Ascending aorta (tissue), 2 donors: ENCODE measurements at regions of chr5 and their contacts with region 1.

Region 1: DNA sequence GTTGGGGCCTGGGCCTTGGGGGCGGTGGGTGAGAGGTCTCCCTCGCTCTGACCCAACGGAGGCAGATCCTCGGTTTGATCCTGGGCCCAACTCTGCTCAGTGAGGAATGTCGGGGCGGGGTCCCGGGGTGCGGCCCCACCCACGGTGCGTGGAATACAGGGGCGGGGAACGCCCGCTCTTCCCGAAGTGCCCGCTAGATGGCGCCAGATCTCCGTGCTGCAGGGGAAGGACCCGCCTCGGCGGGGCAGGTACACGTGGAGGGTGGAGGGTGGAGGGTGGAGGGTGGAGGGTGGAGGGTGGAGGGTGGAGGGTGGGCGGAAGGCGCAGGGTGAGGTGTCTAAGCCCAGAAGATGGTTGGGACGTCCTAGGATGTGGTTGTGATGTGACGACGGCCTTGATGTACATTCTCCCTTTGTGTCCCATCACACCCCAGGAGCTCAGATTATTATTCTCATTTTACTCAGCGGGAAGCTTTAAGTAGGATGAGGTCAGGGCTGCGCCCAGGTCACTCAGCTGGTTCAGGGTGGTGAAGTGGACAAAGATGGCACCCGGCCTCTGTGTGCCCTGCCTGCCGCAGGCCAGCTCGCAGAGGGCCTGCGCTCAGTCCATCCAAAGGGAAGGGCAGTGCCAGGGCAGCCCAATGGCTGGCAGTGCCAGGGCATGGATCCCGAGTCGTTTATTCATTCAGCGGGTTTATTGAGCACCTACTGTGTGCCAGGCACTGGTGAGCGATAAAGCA is 9.4 kb upstream of the RPS14 start:
- DNase-seq: peak; percentile 24 to 91
- H3K4me3 ChIP-seq: peak overlapping the region in 1 of 2 donors; percentile 55
- H3K27ac ChIP-seq: no peak overlapping the region
- H3K4me1 ChIP-seq: no peaks in the 10 kb centered on the region
- H3K27me3 ChIP-seq: no peaks in the 10 kb centered on the region
- CTCF ChIP-seq: peak; percentile 84 to 97 (median 90)

Region 2: GRCh38 chr5:150523472-150524350 is 64.7 kb after region 1 on chr5:
- intact Hi-C with region 1: loop called (anchors 1 kb)
- DNase-seq: no peak
- H3K4me3 ChIP-seq: no peak overlapping the region
- H3K27ac ChIP-seq: no peak overlapping the region
- H3K4me1 ChIP-seq: peaks cover 5 to 34% of the 10 kb centered on the region in 2 donors
- H3K27me3 ChIP-seq: no peaks in the 10 kb centered on the region
- CTCF ChIP-seq: peak; percentile 45 to 62 (median 54)

Region 3: DNA sequence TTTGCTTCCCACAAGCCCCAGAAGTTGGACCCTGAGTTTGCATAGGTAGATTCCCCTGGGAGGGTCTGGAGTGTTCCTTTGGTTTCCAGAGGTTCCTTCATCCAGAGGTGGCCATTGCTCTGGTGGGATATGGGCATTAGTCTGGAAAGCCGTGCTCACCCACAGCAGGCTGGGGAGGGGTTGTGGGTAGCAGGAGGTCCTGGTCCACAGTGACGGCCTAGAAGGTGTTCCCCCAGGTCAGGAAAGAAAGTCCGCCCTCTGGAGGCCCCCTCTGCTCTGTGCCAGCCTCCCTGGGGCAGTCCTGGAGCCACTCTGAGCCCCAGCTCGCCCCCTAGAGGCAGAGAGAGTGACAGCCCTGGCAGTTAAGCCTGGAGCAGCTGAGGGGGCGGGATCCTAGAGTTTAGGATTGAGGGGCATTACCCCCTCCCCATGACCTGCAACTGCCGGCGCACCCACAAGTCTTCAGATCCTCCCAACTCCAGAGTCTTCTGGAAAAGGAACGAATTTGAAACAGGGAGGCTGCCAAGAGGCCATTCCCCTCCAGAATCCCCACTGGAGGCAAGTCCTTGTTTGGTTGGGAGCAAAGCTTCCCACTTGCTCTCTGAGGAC is 85.7 kb after region 1 on chr5:
- intact Hi-C with region 1: loop called (anchors 2 kb)
- DNase-seq: peak in 1 of 2 donors; percentile 78
- H3K4me3 ChIP-seq: no peak overlapping the region
- H3K27ac ChIP-seq: peak overlapping the region; percentile 73 to 90
- H3K4me1 ChIP-seq: peaks cover 6 to 21% of the 10 kb centered on the region in 2 donors
- H3K27me3 ChIP-seq: no peaks in the 10 kb centered on the region
- CTCF ChIP-seq: peak; percentile 58 to 62 (median 61)

Region 4: DNA sequence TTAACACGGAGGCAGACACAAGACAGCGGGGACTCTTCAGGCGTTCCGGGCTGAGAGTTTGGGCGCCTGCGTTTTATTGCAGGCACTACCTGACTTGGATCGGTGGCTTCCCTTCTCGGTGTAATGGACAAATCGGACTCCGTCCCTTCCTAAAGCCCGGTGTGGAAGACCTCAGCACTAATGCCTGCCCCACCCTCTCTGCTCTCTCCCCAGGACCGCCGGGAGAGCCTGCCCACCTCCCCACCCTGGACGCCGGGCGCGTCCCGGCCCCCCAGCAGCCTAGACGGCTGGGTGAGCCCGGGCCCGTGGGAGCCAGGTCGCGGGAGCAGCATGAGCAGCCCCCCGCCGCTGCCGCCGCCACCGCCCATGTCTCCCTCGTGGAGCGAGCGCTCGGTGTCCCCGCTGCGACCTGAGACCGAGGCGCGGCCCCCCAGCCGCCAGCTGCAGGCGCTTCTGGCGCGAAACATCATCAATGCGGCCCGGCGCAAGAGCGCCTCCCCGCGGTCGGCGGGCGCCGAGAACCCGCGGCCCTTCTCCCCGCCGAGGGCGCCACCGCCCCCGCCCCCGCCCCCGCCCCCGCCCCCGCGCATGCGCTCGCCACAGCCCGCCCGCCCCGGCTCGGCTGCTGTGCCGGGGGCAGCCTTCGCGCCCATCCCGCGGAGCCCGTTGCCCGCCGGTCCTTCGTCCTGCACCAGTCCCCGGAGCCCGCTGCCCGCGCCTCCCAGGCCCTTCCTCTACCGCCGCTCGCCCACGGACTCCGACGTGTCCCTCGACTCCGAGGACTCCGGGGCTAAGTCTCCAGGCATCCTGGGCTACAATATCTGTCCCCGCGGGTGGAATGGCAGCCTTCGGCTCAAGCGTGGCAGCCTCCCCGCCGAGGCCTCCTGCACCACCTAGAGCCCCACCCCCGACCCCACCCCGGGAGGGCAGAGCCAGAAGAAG is 197.5 kb after region 1 on chr5:
- intact Hi-C with region 1: loop called (anchors 2 kb)
- DNase-seq: no peak
- H3K4me3 ChIP-seq: peak overlapping the region; percentile 44 to 59
- H3K27ac ChIP-seq: peak overlapping the region; percentile 86 to 90
- H3K4me1 ChIP-seq: peaks cover 19 to 56% of the 10 kb centered on the region in 2 donors
- H3K27me3 ChIP-seq: no peaks in the 10 kb centered on the region
- CTCF ChIP-seq: peak; percentile 39 to 66 (median 58)

Region 5: DNA sequence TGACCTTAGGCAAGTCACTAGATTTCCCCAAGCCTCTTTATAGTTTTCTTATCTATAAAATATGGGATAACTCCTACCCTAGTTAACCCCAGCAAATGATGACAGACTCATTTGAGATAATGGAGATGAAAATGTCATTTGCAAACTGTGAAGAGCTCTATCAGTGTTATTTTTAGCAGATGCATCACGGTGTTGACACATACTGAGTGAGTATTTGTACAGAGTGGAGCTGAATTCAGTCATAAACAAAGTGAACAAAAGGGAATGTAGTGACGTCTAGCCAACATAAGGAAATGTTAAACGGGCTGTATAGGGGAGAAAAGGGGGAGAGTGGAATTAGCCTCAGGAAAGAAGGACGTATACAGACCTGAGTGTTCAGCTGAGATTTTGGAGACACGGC is 1870.2 kb after region 1 on chr5:
- intact Hi-C with region 1: no loop called
- DNase-seq: no peak
- H3K4me3 ChIP-seq: no peak overlapping the region
- H3K27ac ChIP-seq: no peak overlapping the region
- H3K4me1 ChIP-seq: no peaks in the 10 kb centered on the region
- H3K27me3 ChIP-seq: no peaks in the 10 kb centered on the region
- CTCF ChIP-seq: no peak